Calu3 (cell line): ENCODE measurements at regions of chr10 and their contacts with region 1.

Region 1: DNA sequence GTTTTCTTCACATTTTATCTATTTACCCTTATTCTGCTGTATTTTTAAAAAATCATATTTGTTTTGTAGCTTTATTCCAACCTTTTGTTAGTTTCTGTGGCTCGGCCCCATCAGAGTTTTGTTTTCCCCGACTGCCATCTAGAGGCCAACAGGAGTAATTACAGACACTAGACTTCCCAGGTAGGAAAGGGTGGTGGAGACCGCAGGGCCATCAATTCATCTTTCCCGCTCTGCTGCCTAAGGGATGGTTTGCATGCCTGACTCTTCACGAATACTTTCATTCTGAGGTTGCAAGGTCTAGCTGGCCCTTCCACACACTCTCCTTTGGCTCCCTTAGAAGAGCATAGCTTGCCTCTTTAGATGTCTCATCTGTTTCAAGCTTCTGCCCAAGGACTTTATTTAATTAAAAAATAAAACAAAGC is 38.3 kb downstream of the LYZL2 start:
- DNase-seq: peak; percentile 51
- H3K4me3 Mint-ChIP-seq: no peak overlapping the region
- H3K27ac Mint-ChIP-seq: no peak overlapping the region
- H3K4me1 Mint-ChIP-seq: peaks cover 11% of the 10 kb centered on the region
- H3K27me3 Mint-ChIP-seq: peaks cover 27% of the 10 kb centered on the region
- CTCF ChIP-seq: peak; percentile 43

Region 2: GRCh38 chr10:30359373-30360206 is 231.7 kb before region 1 on chr10:
- CTCF ChIA-PET with region 1: interaction called, 12 read pairs
- intact Hi-C with region 1: no loop called
- DNase-seq: peak; percentile 78
- H3K4me3 Mint-ChIP-seq: no peak overlapping the region
- H3K27ac Mint-ChIP-seq: no peak overlapping the region
- H3K4me1 Mint-ChIP-seq: peaks cover 18% of the 10 kb centered on the region
- H3K27me3 Mint-ChIP-seq: peaks cover 15% of the 10 kb centered on the region
- CTCF ChIP-seq: peak; percentile 92

Region 3: DNA sequence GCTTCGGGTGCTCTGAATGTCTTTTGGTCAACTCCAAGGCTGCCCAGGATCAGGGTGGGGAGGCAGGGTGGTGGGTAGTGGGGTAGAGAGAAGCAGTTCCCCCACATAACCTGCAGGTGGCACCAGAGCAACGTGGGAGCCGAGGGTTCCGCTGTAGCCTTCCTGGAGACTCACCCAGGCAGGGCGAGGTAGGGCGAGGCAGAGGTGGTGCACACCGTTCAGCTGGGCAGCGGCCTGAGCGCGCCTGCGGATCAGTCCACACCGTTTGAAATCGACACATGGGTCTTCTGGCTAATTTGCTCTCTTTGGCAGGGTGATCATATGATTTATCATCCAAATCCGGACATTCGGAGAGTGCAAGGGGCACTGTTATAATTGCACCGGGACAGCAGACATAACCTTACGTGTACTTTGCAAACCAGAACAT is 198.7 kb before region 1 on chr10:
- CTCF ChIA-PET with region 1: interaction called, 14 read pairs
- intact Hi-C with region 1: loop called (anchors 2 kb)
- DNase-seq: peak; percentile 85
- H3K4me3 Mint-ChIP-seq: peak overlapping the region; percentile 34
- H3K27ac Mint-ChIP-seq: no peak overlapping the region
- H3K4me1 Mint-ChIP-seq: peaks cover 11% of the 10 kb centered on the region
- H3K27me3 Mint-ChIP-seq: no peaks in the 10 kb centered on the region
- CTCF ChIP-seq: peak; percentile 85

Region 4: GRCh38 chr10:30413996-30414576 is 177.2 kb before region 1 on chr10:
- CTCF ChIA-PET with region 1: interaction called, 11 read pairs
- intact Hi-C with region 1: loop called (anchors 1 kb)
- DNase-seq: peak; percentile 51
- H3K4me3 Mint-ChIP-seq: no peak overlapping the region
- H3K27ac Mint-ChIP-seq: no peak overlapping the region
- H3K4me1 Mint-ChIP-seq: peaks cover 16% of the 10 kb centered on the region
- H3K27me3 Mint-ChIP-seq: no peaks in the 10 kb centered on the region
- CTCF ChIP-seq: peak; percentile 71

Region 5: DNA sequence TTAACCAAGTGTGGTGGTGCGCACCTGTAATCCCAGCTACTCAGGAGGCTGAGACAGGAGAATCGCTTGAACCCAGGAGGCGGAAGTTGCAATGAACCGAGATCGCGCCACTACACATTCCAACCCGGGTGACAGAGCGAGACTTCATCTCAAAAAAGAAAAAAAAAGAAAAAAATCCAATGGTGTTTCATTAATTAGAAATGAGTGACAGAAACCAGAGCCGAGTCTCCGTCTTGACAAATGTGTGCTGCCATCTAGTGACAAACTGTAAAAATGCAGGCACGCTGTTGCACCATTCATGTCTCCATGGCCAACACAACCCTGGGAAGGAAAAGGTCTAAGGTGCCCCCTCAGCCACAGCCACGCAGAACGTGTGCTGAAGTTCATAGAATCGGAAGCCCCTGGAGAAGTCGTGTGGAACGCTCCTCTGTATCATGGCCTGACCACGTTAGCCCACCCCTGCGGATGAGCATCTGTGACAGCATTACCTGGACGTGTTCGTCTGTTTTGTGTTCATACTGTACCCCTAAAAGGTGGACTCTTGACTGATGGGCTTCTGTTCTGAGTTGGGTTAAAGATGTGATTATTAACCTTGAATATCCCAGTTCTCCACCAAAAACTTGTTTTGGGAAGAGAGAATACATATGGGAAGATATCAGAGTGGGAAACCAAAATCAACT is 56.7 kb before region 1 on chr10:
- CTCF ChIA-PET with region 1: no interaction called
- intact Hi-C with region 1: loop called (anchors 2 kb)
- DNase-seq: peak; percentile 67
- H3K4me3 Mint-ChIP-seq: no peak overlapping the region
- H3K27ac Mint-ChIP-seq: no peak overlapping the region
- H3K4me1 Mint-ChIP-seq: peaks cover 28% of the 10 kb centered on the region
- H3K27me3 Mint-ChIP-seq: no peaks in the 10 kb centered on the region
- CTCF ChIP-seq: peak; percentile 85

Region 6: GRCh38 chr10:30606313-30606712 is 15.1 kb after region 1 on chr10:
- CTCF ChIA-PET with region 1: interaction called, 10 read pairs
- intact Hi-C with region 1: no loop called
- DNase-seq: peak; percentile 35
- H3K4me3 Mint-ChIP-seq: no peak overlapping the region
- H3K27ac Mint-ChIP-seq: peak overlapping the region; percentile 73
- H3K4me1 Mint-ChIP-seq: peaks cover 22% of the 10 kb centered on the region
- H3K27me3 Mint-ChIP-seq: no peaks in the 10 kb centered on the region
- CTCF ChIP-seq: no peak